ENCODE measurements at regions of chr2 and their contacts with region 1.

Region 1: DNA sequence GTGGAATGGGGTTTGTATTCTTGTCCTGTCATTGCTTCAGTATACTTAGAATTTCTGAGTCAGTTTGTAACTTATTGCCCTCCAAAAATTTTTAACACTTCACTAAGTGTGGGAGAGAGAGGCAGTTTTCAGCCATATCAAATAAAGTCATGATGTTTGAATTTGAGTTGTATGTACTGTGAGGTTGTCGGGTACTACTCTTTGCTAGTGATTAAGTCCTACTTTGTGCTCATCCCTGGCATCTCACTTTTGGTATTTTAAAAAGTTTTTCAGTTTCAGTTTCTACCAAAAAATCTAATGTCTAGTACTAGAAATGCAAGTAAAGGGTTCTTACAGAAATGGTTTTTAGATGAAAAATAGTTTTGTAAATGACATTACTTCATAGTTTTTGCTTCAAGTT is 40.7 kb downstream of the EIF5B start:
- DNase-seq: no peak
- H3K4me3 Mint-ChIP-seq: no peak overlapping the region
- H3K27ac Mint-ChIP-seq: no peak overlapping the region
- H3K4me1 Mint-ChIP-seq: peaks cover 35% of the 10 kb centered on the region
- H3K27me3 Mint-ChIP-seq: no peaks in the 10 kb centered on the region

Region 2: DNA sequence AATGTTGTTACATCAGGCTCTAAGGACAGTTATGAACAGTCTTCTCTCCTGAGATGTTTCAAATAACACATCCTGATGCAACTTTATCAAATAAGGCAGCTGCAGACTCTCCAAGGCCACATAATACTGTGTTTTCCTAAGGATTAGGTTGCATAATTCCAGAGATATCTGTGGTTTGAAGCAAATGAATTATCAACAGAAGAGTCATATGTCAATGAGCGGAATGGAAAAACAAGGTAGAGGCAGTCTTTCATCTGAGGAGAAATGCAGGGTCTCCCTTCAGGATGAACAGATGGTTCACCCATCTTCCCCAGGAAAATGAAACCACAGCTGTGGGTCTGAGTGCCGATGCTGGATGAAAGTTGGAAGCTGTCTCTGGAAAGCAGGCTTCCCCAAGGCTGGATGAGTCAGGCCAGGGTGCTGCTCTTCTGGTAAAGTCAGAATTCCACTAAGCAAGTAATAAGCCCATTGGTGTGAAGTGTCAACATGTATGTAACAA is 99.0 kb before region 1 on chr2:
- CTCF ChIA-PET with region 1: no interaction called
- intact Hi-C with region 1: no loop called
- DNase-seq: no peak
- H3K4me3 Mint-ChIP-seq: no peak overlapping the region
- H3K27ac Mint-ChIP-seq: no peak overlapping the region
- H3K4me1 Mint-ChIP-seq: no peaks in the 10 kb centered on the region
- H3K27me3 Mint-ChIP-seq: no peaks in the 10 kb centered on the region

Region 3: GRCh38 chr2:99348173-99348572 is 29.7 kb before region 1 on chr2:
- CTCF ChIA-PET with region 1: no interaction called
- intact Hi-C with region 1: loop called (anchors 1 kb)
- DNase-seq: peak; percentile 52
- H3K4me3 Mint-ChIP-seq: no peak overlapping the region
- H3K27ac Mint-ChIP-seq: peak overlapping the region; percentile 87
- H3K4me1 Mint-ChIP-seq: peaks cover 67% of the 10 kb centered on the region
- H3K27me3 Mint-ChIP-seq: no peaks in the 10 kb centered on the region